Prostate gland (tissue), 2 donors: ENCODE measurements at regions of chr18 and their contacts with region 1.

Region 1: DNA sequence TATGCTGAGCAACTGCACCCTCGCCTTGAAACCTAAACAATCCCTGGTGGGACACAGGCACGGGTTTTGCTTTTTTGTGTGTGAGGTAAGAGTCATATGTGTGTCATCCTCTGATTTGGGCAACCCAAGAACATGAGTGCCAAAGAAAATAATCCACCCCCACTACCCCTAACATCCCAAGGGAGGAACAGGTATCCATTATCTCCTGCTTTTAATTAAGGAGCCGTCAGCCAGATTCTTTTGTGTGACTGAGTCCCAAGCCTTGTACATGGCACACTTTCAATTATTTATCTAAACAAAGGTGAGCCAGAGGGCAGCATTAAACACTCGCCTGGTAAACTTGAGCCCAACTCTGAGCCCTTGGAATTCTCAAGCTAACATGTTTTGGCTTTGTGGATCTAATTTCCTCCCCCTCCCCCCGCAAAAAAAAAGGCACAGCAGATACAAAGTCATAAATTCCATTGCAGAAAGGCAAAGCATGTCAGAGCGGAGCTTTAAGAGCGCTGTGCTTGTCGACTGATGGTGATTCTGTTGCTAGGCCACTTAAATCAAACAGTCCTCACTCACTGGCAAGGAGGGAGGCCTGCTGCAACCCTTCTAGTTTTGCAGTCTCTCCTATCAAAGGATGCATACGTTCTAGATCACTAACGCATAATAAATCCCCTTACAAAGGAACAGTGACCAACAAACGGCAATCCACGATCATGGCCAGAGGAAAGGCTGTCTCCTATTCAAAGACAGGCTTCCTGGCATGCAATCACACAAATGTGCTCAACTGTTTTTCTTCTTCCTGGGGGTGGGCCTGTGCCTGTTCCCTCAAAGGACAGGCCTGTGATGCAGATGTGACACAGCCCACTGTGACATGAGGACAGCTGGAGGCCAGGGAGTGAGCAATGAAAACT is 143.5 kb upstream of the LMAN1 start:
- DNase-seq: peak; percentile 54
- H3K4me3 ChIP-seq: no peak overlapping the region
- H3K27ac ChIP-seq: peak overlapping the region in 1 of 2 donors; percentile 44
- H3K4me1 ChIP-seq: no peaks in the 10 kb centered on the region
- H3K27me3 ChIP-seq: no peaks in the 10 kb centered on the region
- CTCF ChIP-seq: no peak
- POLR2A ChIP-seq: no peak

Region 2: GRCh38 chr18:59612381-59612780 is 109.9 kb after region 1 on chr18:
- intact Hi-C with region 1: loop called (anchors 10 kb)
- DNase-seq: no peak
- H3K4me3 ChIP-seq: no peak overlapping the region
- H3K27ac ChIP-seq: no peak overlapping the region
- H3K4me1 ChIP-seq: no peaks in the 10 kb centered on the region
- H3K27me3 ChIP-seq: no peaks in the 10 kb centered on the region
- CTCF ChIP-seq: no peak
- POLR2A ChIP-seq: no peak